Endothelial cell of umbilical vein (primary cell): ENCODE measurements at regions of chr5 and their contacts with region 1.

Region 1: GRCh38 chr5:38441453-38442246 is 114.8 kb downstream of the LIFR start:
- DNase-seq: peak; percentile 89
- H3K4me3 ChIP-seq: no peak overlapping the region
- H3K27ac ChIP-seq: no peak overlapping the region
- H3K4me1 ChIP-seq: no peaks in the 10 kb centered on the region
- H3K27me3 ChIP-seq: no peaks in the 10 kb centered on the region
- CTCF ChIP-seq: peak; percentile 89 to 96
- POLR2A ChIP-seq: no peak

Region 2: DNA sequence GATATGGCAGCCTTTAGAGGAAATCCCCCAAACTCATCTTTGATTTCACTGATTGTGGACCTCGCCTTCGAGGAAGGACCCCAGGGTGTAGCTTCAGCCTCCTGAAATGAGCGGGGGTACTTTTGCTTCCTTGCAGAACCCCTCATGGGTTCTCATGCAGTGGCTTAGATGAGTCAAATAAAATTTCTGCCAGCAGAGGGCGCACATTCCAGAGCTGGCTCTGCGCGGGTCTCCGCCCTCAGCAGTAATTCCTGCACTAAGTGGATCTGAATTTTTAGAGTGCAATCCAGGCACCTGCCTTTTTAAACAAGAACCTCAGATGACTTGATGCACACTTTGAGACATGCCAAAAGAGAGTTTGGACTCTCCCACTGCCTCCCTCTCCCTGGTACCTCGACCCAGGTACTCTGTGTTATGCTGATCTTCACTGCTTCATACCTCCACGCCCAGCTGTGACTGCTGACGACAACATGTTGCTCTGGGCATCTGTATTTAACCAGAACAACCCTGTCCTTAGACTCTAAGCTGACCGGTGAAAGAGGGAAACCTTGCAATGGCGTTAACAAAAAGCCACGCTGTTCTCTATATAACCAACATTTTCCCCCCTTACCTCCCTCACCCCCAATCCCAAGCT is 176.0 kb before region 1 on chr5:
- CTCF ChIA-PET with region 1: interaction called, 10 read pairs
- POLR2A ChIA-PET with region 1: no interaction called
- dilution Hi-C with region 1: no loop called
- intact Hi-C with region 1: no loop called
- DNase-seq: peak; percentile 56
- H3K4me3 ChIP-seq: no peak overlapping the region
- H3K27ac ChIP-seq: no peak overlapping the region
- H3K4me1 ChIP-seq: no peaks in the 10 kb centered on the region
- H3K27me3 ChIP-seq: peaks cover 19 to 26% of the 10 kb centered on the region in 2 experiments
- CTCF ChIP-seq: peak; percentile 73 to 78
- POLR2A ChIP-seq: no peak

Region 3: DNA sequence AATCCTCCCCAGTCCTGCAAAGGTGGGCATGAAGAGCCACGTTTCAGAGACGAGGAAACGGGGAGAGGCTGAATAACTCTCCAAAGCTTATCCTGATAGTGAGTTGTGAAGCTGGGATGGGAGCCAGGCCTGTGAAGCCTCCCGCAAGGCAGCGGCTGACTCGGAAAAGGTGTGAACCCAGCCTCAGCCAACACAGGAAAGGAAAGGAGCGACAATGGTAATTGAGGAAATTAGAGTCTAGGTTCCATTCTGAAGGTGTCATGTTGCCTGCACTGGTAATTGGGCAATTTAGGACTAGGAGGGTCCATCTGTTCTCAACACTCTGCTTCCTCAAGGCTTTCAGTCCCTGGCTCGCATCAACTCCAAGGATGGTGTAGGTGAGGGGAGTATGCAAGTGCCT is 31.4 kb after region 1 on chr5:
- CTCF ChIA-PET with region 1: interaction called, 163 read pairs
- POLR2A ChIA-PET with region 1: no interaction called
- dilution Hi-C with region 1: no loop called
- intact Hi-C with region 1: no loop called
- DNase-seq: peak; percentile 37
- H3K4me3 ChIP-seq: no peak overlapping the region
- H3K27ac ChIP-seq: no peak overlapping the region
- H3K4me1 ChIP-seq: peaks cover 13% of the 10 kb centered on the region
- H3K27me3 ChIP-seq: no peaks in the 10 kb centered on the region
- CTCF ChIP-seq: no peak
- POLR2A ChIP-seq: no peak

Region 4: DNA sequence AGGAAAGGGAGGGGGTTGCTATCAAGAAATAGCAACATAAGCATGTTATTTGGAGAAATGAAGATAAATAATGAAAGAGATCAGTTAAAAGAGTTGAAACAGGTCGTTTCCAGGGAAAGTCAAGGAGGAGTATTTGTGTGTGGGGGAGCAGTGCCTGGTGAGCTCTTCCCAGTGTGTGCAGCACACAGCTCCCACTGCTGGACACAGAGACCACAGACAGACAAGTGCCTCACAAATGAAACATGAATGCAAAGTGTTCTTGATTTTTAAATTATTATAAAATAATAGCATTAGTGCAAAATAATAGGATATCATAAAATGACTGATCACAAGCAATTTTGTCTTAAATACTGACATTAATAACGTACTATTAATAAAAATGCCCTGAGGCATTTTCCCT is 74.0 kb after region 1 on chr5:
- CTCF ChIA-PET with region 1: interaction called, 122 read pairs
- POLR2A ChIA-PET with region 1: interaction called, 3 read pairs
- dilution Hi-C with region 1: no loop called
- intact Hi-C with region 1: loop called (anchors 1 kb)
- DNase-seq: peak; percentile 20
- H3K4me3 ChIP-seq: no peak overlapping the region
- H3K27ac ChIP-seq: no peak overlapping the region
- H3K4me1 ChIP-seq: no peaks in the 10 kb centered on the region
- H3K27me3 ChIP-seq: no peaks in the 10 kb centered on the region
- CTCF ChIP-seq: peak in 1 of 2 donors; percentile 46
- POLR2A ChIP-seq: no peak

Region 5: DNA sequence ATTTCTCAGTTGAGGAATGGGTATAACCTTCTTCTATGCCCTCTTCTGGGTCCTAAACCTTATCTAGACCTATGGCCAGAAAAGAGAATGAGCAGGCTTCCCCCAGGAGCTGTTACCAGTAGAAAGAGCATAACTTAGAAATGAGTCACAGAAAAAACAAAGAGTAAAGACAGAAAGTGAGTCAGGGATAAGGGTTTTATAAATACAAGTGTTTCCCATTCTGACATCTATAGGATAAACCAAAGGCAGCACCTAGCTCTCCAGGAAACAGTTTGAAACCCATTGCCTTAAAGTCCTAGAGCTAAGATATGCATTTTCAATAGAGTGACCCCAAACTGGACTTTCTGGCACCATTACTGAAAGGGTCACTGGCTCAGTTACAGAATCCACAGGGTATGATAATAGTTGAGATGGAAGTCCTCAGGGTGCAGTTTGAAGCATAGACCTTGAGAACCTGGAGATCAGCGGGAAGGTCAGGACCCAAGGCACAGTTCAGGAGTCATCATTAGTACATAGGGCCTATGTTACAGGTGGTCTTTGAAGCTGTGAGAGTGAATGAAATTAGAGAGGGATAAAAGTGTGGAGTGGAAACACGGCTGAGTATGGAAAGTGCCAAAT is 157.5 kb after region 1 on chr5:
- CTCF ChIA-PET with region 1: interaction called, 21 read pairs
- POLR2A ChIA-PET with region 1: no interaction called
- dilution Hi-C with region 1: no loop called
- intact Hi-C with region 1: no loop called
- DNase-seq: peak; percentile 87
- H3K4me3 ChIP-seq: no peak overlapping the region
- H3K27ac ChIP-seq: peak overlapping the region; percentile 66
- H3K4me1 ChIP-seq: peaks cover 59% of the 10 kb centered on the region
- H3K27me3 ChIP-seq: no peaks in the 10 kb centered on the region
- CTCF ChIP-seq: no peak
- POLR2A ChIP-seq: no peak

Region 6: GRCh38 chr5:38751103-38751502 is 309.5 kb after region 1 on chr5:
- CTCF ChIA-PET with region 1: interaction called, 17 read pairs
- POLR2A ChIA-PET with region 1: no interaction called
- dilution Hi-C with region 1: no loop called
- intact Hi-C with region 1: no loop called
- DNase-seq: no peak
- H3K4me3 ChIP-seq: no peak overlapping the region
- H3K27ac ChIP-seq: no peak overlapping the region
- H3K4me1 ChIP-seq: no peaks in the 10 kb centered on the region
- H3K27me3 ChIP-seq: peaks cover 7 to 13% of the 10 kb centered on the region in 2 experiments
- CTCF ChIP-seq: peak in 1 of 2 donors; percentile 7
- POLR2A ChIP-seq: no peak